ENCODE measurements at regions of chr4 and their contacts with region 1.

Region 1: DNA sequence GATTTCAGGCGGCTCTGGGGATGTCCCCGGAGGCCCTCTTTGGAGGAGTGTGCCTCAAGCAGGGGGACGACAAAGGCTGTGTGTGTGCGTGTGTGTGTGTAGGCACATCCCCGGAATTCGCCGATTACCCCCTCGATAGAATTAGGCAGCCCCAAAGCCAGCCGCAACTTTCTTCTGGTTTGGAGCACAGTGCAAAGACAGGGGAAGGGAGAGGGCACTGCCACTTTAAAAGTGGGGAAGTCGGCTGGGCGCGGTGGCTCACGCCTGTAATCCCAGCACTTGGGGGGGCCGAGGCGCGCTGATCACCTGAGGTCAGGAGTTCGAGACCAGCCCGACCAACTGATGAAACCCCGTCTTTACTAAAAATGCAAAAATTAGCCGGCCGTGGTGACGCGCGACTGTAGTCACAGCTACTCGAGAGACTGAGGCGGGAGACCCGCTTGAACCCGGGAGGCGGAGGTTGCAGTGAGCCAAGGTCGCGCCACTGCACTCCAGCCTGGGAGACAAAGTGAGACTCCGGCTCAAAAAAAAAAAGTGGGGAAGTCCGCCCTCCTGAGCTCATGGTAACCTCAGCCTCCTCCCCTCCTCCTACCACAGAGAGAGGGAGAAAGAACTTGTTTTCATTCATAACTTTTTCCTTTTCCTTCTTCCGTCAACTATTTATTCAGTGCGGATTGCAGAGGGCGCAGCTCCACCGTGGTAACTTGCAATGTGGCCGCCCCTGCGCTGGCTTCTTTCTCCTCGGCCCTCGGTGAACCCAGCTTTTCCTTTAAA is 2.4 kb downstream of the SPRY1 start:
- DNase-seq: peak; percentile 41
- H3K4me3 Mint-ChIP-seq: peak overlapping the region; percentile 80
- H3K27ac Mint-ChIP-seq: peak overlapping the region; percentile 78
- H3K4me1 Mint-ChIP-seq: peaks cover 33% of the 10 kb centered on the region
- H3K27me3 Mint-ChIP-seq: peaks cover 39% of the 10 kb centered on the region

Region 2: GRCh38 chr4:123412091-123412505 is 13.1 kb after region 1 on chr4:
- CTCF ChIA-PET with region 1: interaction called, 3 read pairs
- POLR2A ChIA-PET with region 1: interaction called, 10 read pairs
- DNase-seq: no peak
- H3K4me3 Mint-ChIP-seq: no peak overlapping the region
- H3K27ac Mint-ChIP-seq: peak overlapping the region; percentile 85
- H3K4me1 Mint-ChIP-seq: peaks cover 45% of the 10 kb centered on the region
- H3K27me3 Mint-ChIP-seq: no peaks in the 10 kb centered on the region

Measured in activated CD4-positive, alpha-beta memory T cell treated with anti-CD3 and anti-CD28 coated beads, Interleukin-2, amount 10 ng/mL, durations not matched to agents 7 days and 5 days (primary cell).